ENCODE measurements at regions of chr16 and their contacts with region 1.

Region 1: GRCh38 chr16:24853830-24854229 is 8.1 kb downstream of the SLC5A11 start:
- DNase-seq: peak; percentile 9
- ATAC-seq: no peak
- H3K4me3 Mint-ChIP-seq: no peak overlapping the region
- H3K27ac Mint-ChIP-seq: no peak overlapping the region
- H3K4me1 Mint-ChIP-seq: peaks cover 17% of the 10 kb centered on the region
- H3K27me3 Mint-ChIP-seq: peaks cover 11% of the 10 kb centered on the region

Region 2: GRCh38 chr16:24721830-24722238 is 132.0 kb before region 1 on chr16:
- CTCF ChIA-PET with region 1: no interaction called
- POLR2A ChIA-PET with region 1: no interaction called
- intact Hi-C with region 1: loop called in 1 of 2 experiments (anchors 5 kb)
- DNase-seq: peak; percentile 81
- ATAC-seq: peak; percentile 90
- H3K4me3 Mint-ChIP-seq: no peak overlapping the region
- H3K27ac Mint-ChIP-seq: peak overlapping the region; percentile 6
- H3K4me1 Mint-ChIP-seq: peaks cover 29% of the 10 kb centered on the region
- H3K27me3 Mint-ChIP-seq: peaks cover 2% of the 10 kb centered on the region

Region 3: DNA sequence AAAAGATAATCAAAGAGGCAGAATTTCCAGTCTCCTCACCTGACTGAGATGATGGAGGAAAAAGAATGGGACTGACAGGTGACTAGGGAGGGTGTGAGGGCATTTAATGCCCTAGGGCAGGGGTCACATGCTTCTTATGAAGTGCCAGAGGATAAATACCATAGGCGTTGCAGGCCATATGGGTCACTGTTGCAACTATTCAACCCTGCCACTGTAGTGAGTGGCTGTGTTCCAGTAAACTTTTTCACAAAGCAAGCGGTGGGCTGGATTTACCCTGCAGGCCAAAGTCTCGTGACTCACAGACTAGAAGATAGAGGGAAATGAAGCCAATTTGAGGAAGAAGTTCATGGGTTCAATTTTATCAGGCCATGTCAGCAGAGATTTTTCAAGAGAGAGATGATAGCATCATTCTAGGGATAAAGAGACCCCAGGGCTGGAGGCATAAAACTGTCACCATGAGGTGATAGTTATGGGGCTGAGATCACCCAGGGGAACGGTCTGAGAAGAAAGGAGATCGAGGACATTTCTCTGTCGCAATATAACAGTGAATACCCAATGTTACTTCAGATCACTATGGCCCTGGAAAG is 152.7 kb after region 1 on chr16:
- CTCF ChIA-PET with region 1: no interaction called
- POLR2A ChIA-PET with region 1: no interaction called
- intact Hi-C with region 1: loop called in 1 of 2 experiments (anchors 5 kb)
- DNase-seq: no peak
- ATAC-seq: no peak
- H3K4me3 Mint-ChIP-seq: no peak overlapping the region
- H3K27ac Mint-ChIP-seq: peak overlapping the region; percentile 0
- H3K4me1 Mint-ChIP-seq: peaks cover 71% of the 10 kb centered on the region
- H3K27me3 Mint-ChIP-seq: no peaks in the 10 kb centered on the region

Region 4: DNA sequence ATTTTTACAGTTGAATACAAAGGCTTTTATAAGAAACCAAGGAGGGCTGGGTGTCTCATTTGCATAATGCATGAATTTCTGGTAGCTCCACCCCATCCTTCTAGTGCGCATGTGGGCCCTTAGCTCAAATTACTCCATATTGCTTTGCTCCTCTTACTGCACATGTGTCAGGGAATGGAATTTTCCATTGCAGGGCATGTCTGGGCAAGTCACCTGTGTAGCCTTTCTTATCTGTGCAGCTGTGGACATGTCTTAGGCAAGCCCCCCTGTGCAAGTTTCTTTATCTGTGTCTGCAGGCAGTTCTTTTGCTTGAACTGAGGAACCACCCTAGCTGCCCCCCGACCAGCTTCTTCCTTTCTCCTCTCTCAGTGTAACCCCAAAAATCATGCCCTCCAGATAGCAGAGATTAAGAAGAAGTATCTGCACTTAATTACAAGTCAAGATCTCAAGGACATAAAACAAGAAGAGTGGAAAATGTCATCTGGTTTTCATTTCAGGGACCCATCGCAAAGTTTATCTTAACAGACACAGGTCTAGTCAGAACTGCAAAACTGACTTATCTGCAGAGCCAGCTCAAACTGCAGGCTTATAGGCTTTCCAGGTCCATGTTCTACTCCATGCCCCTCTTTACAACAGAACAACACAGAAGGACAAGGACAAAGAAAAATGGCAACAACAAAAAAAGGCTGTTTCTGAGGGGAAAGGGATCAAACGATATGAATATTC is 700.0 kb after region 1 on chr16:
- CTCF ChIA-PET with region 1: no interaction called
- POLR2A ChIA-PET with region 1: no interaction called
- intact Hi-C with region 1: no loop called
- DNase-seq: no peak
- ATAC-seq: no peak
- H3K4me3 Mint-ChIP-seq: no peak overlapping the region
- H3K27ac Mint-ChIP-seq: no peak overlapping the region
- H3K4me1 Mint-ChIP-seq: no peaks in the 10 kb centered on the region
- H3K27me3 Mint-ChIP-seq: peaks cover 9% of the 10 kb centered on the region